Heart right ventricle (tissue), 16 donors: ENCODE measurements at regions of chr5 and their contacts with region 1.

Region 1: DNA sequence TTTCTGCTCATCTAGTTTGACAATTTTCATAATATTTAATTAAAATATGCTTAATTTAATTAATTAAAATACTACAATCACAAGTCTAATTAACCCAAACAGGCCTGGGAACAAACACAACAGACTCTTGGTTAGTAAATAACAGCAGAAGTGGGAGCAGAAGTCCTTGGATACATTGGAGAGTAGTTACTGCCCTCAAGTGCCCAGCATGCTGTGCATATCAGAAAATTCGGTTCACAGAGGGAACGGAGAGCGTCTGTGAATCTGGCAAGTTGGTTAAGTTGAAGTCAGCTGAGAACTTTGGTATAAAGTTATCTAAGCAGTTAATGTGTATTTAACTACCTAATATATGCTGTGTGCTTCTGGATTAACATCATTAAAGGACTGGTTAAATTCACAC is 87.0 kb upstream of the ATG10 start:
- DNase-seq: peak in 1 of 2 donors; percentile 18
- ATAC-seq: peak in 5 of 8 donors; percentile 47 to 75 (median 70)
- H3K4me3 ChIP-seq: no peak overlapping the region
- H3K27ac ChIP-seq: no peak overlapping the region
- H3K4me1 ChIP-seq: no peaks in the 10 kb centered on the region
- H3K27me3 ChIP-seq: no peaks in the 10 kb centered on the region
- CTCF ChIP-seq: peak in 7 of 9 donors; percentile 6 to 55 (median 37)

Region 2: DNA sequence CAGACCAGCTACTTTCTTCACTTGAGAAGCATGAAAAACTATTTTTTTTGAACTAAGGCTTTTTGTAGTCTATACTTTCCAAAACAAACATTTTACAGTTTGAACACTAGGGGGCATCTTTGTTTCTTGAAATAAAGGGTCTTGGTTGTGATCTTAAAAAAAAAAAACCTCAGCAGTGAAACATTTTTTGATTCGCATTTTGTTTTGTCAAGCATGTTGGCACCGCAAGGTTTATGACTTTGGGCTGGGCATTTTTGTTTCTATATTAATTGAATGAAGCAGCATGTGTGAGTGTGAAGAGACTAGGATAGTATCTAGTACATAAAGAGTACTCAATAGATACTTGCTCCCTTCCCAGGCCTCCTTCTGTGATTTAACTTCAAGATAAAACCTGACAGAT is 459.3 kb before region 1 on chr5:
- intact Hi-C with region 1: loop called in 2 of 10 experiments (anchors 10 kb)
- DNase-seq: no peak
- ATAC-seq: peak in 7 of 8 donors; percentile 33 to 81 (median 65)
- H3K4me3 ChIP-seq: no peak overlapping the region
- H3K27ac ChIP-seq: peak overlapping the region in 4 of 10 donors; percentile 14 to 57 (median 30)
- H3K4me1 ChIP-seq: peaks cover 0 to 34% (median 20%) of the 10 kb centered on the region in 9 donors
- H3K27me3 ChIP-seq: no peaks in the 10 kb centered on the region
- CTCF ChIP-seq: peak; percentile 63 to 80 (median 71)

Region 3: GRCh38 chr5:81768667-81769452 is 116.0 kb before region 1 on chr5:
- intact Hi-C with region 1: no loop called
- DNase-seq: no peak
- ATAC-seq: no peak
- H3K4me3 ChIP-seq: no peak overlapping the region
- H3K27ac ChIP-seq: no peak overlapping the region
- H3K4me1 ChIP-seq: peaks cover 0 to 18% (median 5%) of the 10 kb centered on the region in 9 donors
- H3K27me3 ChIP-seq: no peaks in the 10 kb centered on the region
- CTCF ChIP-seq: no peak

Region 4: GRCh38 chr5:82259172-82259800 is 374.4 kb after region 1 on chr5:
- intact Hi-C with region 1: no loop called
- DNase-seq: no peak
- ATAC-seq: peak in 2 of 8 donors; percentile 41 to 42
- H3K4me3 ChIP-seq: no peak overlapping the region
- H3K27ac ChIP-seq: no peak overlapping the region
- H3K4me1 ChIP-seq: peaks cover 0 to 8% (median 0%) of the 10 kb centered on the region in 9 donors
- H3K27me3 ChIP-seq: no peaks in the 10 kb centered on the region
- CTCF ChIP-seq: peak in 7 of 9 donors; percentile 29 to 64 (median 47)